ENCODE measurements at regions of chr14 and their contacts with region 1.

Region 1: GRCh38 chr14:32820181-32820580 is 118.5 kb upstream of the NPAS3 start:
- DNase-seq: peak in 3 of 5 donors; percentile 31 to 37 (median 34)
- ATAC-seq: peak; percentile 56 to 73 (median 67)
- H3K4me3 ChIP-seq: no peak overlapping the region
- H3K27ac ChIP-seq: peak overlapping the region; percentile 26 to 96 (median 74)
- H3K4me1 ChIP-seq: peaks cover 0 to 70% (median 9%) of the 10 kb centered on the region in 12 donors
- H3K27me3 ChIP-seq: no peaks in the 10 kb centered on the region
- CTCF ChIP-seq: no peak
- POLR2A ChIP-seq: no peak

Region 2: GRCh38 chr14:32724867-32725471 is 95.2 kb before region 1 on chr14:
- intact Hi-C with region 1: loop called in 1 of 10 experiments (anchors 5 kb)
- DNase-seq: no peak
- ATAC-seq: no peak
- H3K4me3 ChIP-seq: peak overlapping the region in 6 of 12 donors; percentile 3 to 17 (median 10)
- H3K27ac ChIP-seq: peak overlapping the region in 6 of 12 donors; percentile 1 to 49 (median 16)
- H3K4me1 ChIP-seq: peaks cover 0 to 50% (median 13%) of the 10 kb centered on the region in 12 donors
- H3K27me3 ChIP-seq: no peaks in the 10 kb centered on the region
- CTCF ChIP-seq: no peak
- POLR2A ChIP-seq: no peak